K562 (cell line): ENCODE measurements at regions of chrX and their contacts with region 1.

Region 1: GRCh38 chrX:73877687-73878086 is 314.7 kb downstream of the CHIC1 start:
- DNase-seq: no peak
- ATAC-seq: no peak
- H3K4me3 ChIP-seq: no peak overlapping the region
- H3K27ac ChIP-seq: no peak overlapping the region
- H3K4me1 ChIP-seq: no peaks in the 10 kb centered on the region
- H3K27me3 ChIP-seq: no peaks in the 10 kb centered on the region
- CTCF ChIP-seq: no peak
- EP300 ChIP-seq: no peak
- POLR2A ChIP-seq: no peak
- RAD21 ChIP-seq: no peak

Region 2: DNA sequence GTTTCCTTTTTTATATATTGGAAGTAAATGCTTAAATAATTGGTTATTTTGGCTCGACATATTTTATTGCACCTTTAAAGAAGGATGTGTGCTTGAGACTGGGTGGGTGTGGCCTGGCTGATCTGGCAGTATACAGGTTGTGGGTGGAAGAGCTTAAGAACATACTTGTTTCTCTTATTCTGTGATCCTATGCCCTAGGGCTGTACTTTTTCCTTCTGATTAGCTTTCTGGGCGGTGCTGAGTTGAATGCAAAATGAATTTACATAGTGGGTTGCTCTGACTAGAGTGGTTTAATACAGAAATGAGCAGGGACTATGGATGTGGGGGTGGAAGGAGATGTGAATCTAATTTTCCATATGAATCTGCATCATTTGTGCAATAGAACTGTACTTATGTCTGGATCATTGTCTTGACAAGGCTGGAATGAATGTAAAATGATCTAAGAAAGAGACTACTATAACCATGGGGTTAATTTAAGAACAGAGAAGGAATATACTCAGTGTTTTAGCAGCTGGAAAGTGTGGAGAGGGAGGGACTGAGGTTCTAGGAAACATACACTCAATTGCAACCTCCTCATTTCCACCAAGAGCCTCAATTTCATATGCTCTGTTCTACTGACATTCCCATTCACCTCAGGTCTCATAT is 663.0 kb after region 1 on chrX:
- CTCF ChIA-PET with region 1: no interaction called
- POLR2A ChIA-PET with region 1: no interaction called
- in situ Hi-C with region 1: loop called (anchors 10 kb)
- intact Hi-C with region 1: no loop called
- DNase-seq: no peak
- ATAC-seq: no peak
- H3K4me3 ChIP-seq: no peak overlapping the region
- H3K27ac ChIP-seq: no peak overlapping the region
- H3K4me1 ChIP-seq: peaks cover 0 to 12% of the 10 kb centered on the region in 2 experiments; a peak in 2 of 5 replicates
- H3K27me3 ChIP-seq: peaks cover 0 to 13% of the 10 kb centered on the region in 2 experiments; a peak in 2 of 5 replicates
- CTCF ChIP-seq: no peak
- EP300 ChIP-seq: no peak
- POLR2A ChIP-seq: no peak
- RAD21 ChIP-seq: no peak